ENCODE measurements at regions of chr15 and their contacts with region 1.

Region 1: GRCh38 chr15:85730001-85730820 is 64.5 kb downstream of the KLHL25 start:
- DNase-seq: peak; percentile 70
- H3K4me3 ChIP-seq: no peak overlapping the region
- H3K27ac ChIP-seq: no peak overlapping the region
- H3K4me1 ChIP-seq: no peaks in the 10 kb centered on the region
- H3K27me3 ChIP-seq: no peaks in the 10 kb centered on the region
- CTCF ChIP-seq: peak; percentile 82

Region 2: DNA sequence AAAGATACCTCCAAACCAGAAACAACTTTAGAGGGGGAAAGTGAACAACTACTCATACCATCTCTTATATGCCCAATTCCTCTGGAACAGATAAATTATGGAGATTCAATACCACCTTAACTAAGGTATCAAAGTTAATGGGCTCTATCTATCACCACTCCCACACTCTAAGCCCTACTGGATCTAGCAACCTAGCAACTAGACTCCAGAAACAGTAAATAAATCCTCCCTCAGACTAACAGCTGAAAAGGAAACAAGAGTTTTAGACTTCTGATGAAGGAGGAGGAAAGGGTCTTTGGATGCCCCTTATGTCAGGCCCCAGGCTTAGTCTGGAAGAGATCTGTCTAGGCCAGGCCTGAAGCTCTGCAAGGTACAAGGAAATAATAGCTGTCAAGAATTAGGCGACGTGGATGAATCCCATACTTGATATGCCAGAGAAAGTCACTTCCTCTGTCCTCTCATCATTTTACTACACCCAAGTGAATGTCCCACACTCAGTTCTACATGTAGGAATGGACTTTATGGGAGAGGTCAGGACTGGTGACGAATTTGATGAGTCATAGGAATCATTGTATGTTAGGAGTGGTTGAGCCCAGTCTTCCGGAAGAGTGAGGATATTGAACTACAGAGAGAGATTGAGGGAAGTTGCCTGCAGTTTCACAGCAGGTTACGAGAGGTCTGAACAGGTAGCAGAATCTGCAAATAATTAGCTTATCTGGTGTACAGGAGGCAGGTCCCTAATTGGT is 236.0 kb before region 1 on chr15:
- intact Hi-C with region 1: loop called (anchors 10 kb)
- DNase-seq: peak; percentile 50
- H3K4me3 ChIP-seq: no peak overlapping the region
- H3K27ac ChIP-seq: peak overlapping the region; percentile 82
- H3K4me1 ChIP-seq: no peaks in the 10 kb centered on the region
- H3K27me3 ChIP-seq: no peaks in the 10 kb centered on the region
- CTCF ChIP-seq: no peak

Region 3: GRCh38 chr15:85685356-85685755 is 44.9 kb before region 1 on chr15:
- intact Hi-C with region 1: no loop called
- DNase-seq: no peak
- H3K4me3 ChIP-seq: no peak overlapping the region
- H3K27ac ChIP-seq: no peak overlapping the region
- H3K4me1 ChIP-seq: peaks cover 3% of the 10 kb centered on the region
- H3K27me3 ChIP-seq: no peaks in the 10 kb centered on the region
- CTCF ChIP-seq: no peak

Region 4: GRCh38 chr15:85831415-85832113 is 101.4 kb after region 1 on chr15:
- intact Hi-C with region 1: loop called (anchors 2 kb)
- DNase-seq: peak; percentile 76
- H3K4me3 ChIP-seq: no peak overlapping the region
- H3K27ac ChIP-seq: peak overlapping the region; percentile 11
- H3K4me1 ChIP-seq: no peaks in the 10 kb centered on the region
- H3K27me3 ChIP-seq: no peaks in the 10 kb centered on the region
- CTCF ChIP-seq: peak; percentile 45